Activated CD4-positive, alpha-beta T cell treated with anti-CD3 and anti-CD28 coated beads for 36 hours (primary cell): ENCODE measurements at regions of chr18 and their contacts with region 1.

Region 1: GRCh38 chr18:36095936-36096519 is 28.7 kb upstream of the RPRD1A start:
- DNase-seq: no peak
- ATAC-seq: peak; percentile 49
- H3K4me3 Mint-ChIP-seq: no peak overlapping the region
- H3K27ac Mint-ChIP-seq: no peak overlapping the region
- H3K4me1 Mint-ChIP-seq: peaks cover 3% of the 10 kb centered on the region
- H3K27me3 Mint-ChIP-seq: no peaks in the 10 kb centered on the region

Region 2: GRCh38 chr18:34158881-34159690 is 1936.9 kb before region 1 on chr18:
- CTCF ChIA-PET with region 1: no interaction called
- POLR2A ChIA-PET with region 1: no interaction called
- intact Hi-C with region 1: no loop called
- DNase-seq: peak; percentile 8
- ATAC-seq: no peak
- H3K4me3 Mint-ChIP-seq: no peak overlapping the region
- H3K27ac Mint-ChIP-seq: no peak overlapping the region
- H3K4me1 Mint-ChIP-seq: no peaks in the 10 kb centered on the region
- H3K27me3 Mint-ChIP-seq: peaks cover 22% of the 10 kb centered on the region

Region 3: GRCh38 chr18:35672897-35673296 is 423.1 kb before region 1 on chr18:
- CTCF ChIA-PET with region 1: no interaction called
- POLR2A ChIA-PET with region 1: no interaction called
- intact Hi-C with region 1: no loop called
- DNase-seq: no peak
- ATAC-seq: no peak
- H3K4me3 Mint-ChIP-seq: no peak overlapping the region
- H3K27ac Mint-ChIP-seq: no peak overlapping the region
- H3K4me1 Mint-ChIP-seq: no peaks in the 10 kb centered on the region
- H3K27me3 Mint-ChIP-seq: no peaks in the 10 kb centered on the region

Region 4: DNA sequence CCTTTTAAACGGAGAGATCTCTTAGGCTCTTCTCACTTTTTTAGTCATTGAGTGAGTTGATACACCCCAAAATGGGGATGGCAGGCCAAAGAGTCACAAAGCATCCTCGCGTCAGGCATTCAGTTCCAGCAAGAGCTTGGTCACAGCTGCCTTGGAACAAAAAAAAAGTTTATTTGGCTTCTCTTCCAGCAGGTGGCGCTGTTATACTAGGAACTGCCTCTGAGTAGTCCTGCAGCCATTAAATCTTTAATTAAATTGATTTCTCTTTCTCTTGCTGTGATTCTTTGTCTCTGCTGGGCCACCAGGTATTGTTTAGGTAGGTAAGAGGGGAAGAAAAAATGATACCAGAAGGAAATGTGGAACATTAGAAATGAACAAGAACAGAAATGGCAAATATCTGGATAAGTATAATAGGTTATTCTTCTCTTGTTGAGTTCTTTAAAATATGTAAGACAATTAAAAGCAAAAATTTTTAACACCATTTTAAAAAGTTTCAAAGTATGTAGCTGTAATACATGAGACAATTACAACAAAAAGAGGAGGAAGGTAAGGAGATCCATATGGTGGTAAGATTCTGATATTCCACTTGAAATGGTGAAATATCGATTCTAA is 339.4 kb before region 1 on chr18:
- CTCF ChIA-PET with region 1: no interaction called
- POLR2A ChIA-PET with region 1: no interaction called
- intact Hi-C with region 1: loop called in 1 of 2 experiments (anchors 2 kb)
- DNase-seq: peak; percentile 72
- ATAC-seq: peak; percentile 68
- H3K4me3 Mint-ChIP-seq: no peak overlapping the region
- H3K27ac Mint-ChIP-seq: no peak overlapping the region
- H3K4me1 Mint-ChIP-seq: no peaks in the 10 kb centered on the region
- H3K27me3 Mint-ChIP-seq: peaks cover 8% of the 10 kb centered on the region

Region 5: GRCh38 chr18:36015629-36016028 is 80.4 kb before region 1 on chr18:
- CTCF ChIA-PET with region 1: interaction called, 25 read pairs
- POLR2A ChIA-PET with region 1: no interaction called
- intact Hi-C with region 1: loop called (anchors 1 kb)
- DNase-seq: no peak
- ATAC-seq: no peak
- H3K4me3 Mint-ChIP-seq: no peak overlapping the region
- H3K27ac Mint-ChIP-seq: no peak overlapping the region
- H3K4me1 Mint-ChIP-seq: no peaks in the 10 kb centered on the region
- H3K27me3 Mint-ChIP-seq: no peaks in the 10 kb centered on the region

Region 6: GRCh38 chr18:36186911-36187834 is 91.1 kb after region 1 on chr18 and contains the start of gene MOCOS:
- CTCF ChIA-PET with region 1: no interaction called
- POLR2A ChIA-PET with region 1: no interaction called
- intact Hi-C with region 1: no loop called
- DNase-seq: peak; percentile 53
- ATAC-seq: peak; percentile 63
- H3K4me3 Mint-ChIP-seq: peak within 1 kb of the TSS; percentile 66
- H3K27ac Mint-ChIP-seq: no peak within 1 kb of the TSS
- H3K4me1 Mint-ChIP-seq: peaks cover 6% of the 10 kb centered on the region
- H3K27me3 Mint-ChIP-seq: peaks cover 21% of the 10 kb centered on the region
- total RNA-seq, gene MOCOS: 0.07 to 0.11 TPM

Region 7: DNA sequence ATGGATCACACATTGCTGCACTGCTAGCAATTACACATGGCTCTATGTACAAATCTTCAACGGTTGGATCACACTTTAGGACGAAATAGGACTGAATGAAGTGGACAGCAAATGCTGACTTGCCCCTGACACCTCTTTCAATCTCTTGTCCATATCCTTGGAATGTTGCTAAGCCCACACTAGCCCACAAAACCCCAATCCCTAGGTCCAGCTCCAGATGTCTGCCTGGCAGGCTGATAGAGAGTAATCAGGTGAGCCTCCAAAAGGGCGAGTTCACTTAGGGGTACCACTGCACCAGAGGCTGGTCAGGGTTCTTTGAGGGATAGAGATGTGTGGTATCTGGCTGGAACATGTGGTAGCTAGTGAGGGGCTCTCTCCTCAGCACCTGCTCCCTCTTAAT is 183.0 kb after region 1 on chr18:
- CTCF ChIA-PET with region 1: interaction called, 23 read pairs
- POLR2A ChIA-PET with region 1: no interaction called
- intact Hi-C with region 1: loop called (anchors 1 kb)
- DNase-seq: no peak
- ATAC-seq: no peak
- H3K4me3 Mint-ChIP-seq: no peak overlapping the region
- H3K27ac Mint-ChIP-seq: no peak overlapping the region
- H3K4me1 Mint-ChIP-seq: no peaks in the 10 kb centered on the region
- H3K27me3 Mint-ChIP-seq: peaks cover 21% of the 10 kb centered on the region

Region 8: DNA sequence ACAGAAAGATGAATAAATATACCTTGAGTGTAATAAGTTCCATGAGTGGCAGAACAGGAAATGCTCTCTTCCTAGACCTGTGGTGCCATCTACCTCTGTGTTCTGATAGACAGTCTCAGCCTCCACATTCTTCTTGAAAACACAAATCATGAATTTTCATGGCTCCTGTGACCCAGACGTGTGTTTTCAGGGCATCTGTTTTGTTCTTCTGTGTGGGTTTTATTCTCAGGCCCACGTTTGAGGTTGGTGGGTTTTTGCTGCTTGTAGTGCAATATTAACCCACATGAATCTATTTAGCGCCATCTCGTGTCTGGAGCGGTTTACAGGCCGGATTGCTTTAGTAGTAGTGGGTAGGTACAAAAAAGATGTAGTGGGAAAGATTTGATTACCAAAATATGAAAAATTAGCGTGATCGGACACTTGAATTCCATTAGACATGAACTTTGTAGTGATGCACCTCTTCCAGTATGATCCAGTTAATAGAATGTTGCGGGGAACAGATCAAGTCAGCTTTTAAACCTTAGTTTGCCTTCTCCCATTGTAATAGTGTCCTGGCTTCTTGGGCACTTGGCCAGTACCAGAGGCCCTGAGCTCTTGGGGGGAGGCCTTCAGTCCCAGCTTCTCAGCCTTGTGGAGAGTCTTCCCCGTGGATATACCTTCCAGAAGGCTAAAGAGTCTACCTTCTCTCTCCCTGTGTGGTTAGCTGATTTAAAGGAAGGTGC is 476.3 kb after region 1 on chr18:
- CTCF ChIA-PET with region 1: interaction called, 3 read pairs
- POLR2A ChIA-PET with region 1: no interaction called
- intact Hi-C with region 1: loop called (anchors 1 to 5 kb)
- DNase-seq: peak; percentile 60
- ATAC-seq: peak; percentile 51
- H3K4me3 Mint-ChIP-seq: no peak overlapping the region
- H3K27ac Mint-ChIP-seq: no peak overlapping the region
- H3K4me1 Mint-ChIP-seq: peaks cover 2% of the 10 kb centered on the region
- H3K27me3 Mint-ChIP-seq: peaks cover 2% of the 10 kb centered on the region

Region 9: DNA sequence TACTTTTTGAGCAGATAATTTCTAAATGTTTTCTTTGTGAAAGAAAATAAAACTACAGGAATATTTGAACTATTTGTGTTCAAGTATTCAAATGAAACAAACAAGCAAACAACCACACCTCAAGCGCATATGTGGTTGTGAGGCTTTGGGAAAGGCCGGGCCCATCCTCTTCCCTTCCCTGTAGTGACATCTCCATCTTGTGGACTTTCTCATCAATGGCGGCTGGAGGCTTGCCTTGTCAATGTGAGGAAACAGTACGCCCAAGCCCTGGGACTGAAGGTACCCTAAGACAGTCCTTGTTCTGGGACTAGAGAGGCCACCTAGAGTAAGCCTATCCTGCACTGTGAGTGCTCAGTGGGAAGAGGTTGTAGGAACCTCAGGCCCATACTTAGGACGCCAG is 566.0 kb after region 1 on chr18:
- CTCF ChIA-PET with region 1: no interaction called
- POLR2A ChIA-PET with region 1: no interaction called
- intact Hi-C with region 1: loop called in 1 of 2 experiments (anchors 5 kb)
- DNase-seq: no peak
- ATAC-seq: no peak
- H3K4me3 Mint-ChIP-seq: no peak overlapping the region
- H3K27ac Mint-ChIP-seq: no peak overlapping the region
- H3K4me1 Mint-ChIP-seq: no peaks in the 10 kb centered on the region
- H3K27me3 Mint-ChIP-seq: peaks cover 6% of the 10 kb centered on the region